Left ventricle myocardium inferior (tissue), 1 donor: ENCODE measurements at regions of chr11 and their contacts with region 1.

Region 1: DNA sequence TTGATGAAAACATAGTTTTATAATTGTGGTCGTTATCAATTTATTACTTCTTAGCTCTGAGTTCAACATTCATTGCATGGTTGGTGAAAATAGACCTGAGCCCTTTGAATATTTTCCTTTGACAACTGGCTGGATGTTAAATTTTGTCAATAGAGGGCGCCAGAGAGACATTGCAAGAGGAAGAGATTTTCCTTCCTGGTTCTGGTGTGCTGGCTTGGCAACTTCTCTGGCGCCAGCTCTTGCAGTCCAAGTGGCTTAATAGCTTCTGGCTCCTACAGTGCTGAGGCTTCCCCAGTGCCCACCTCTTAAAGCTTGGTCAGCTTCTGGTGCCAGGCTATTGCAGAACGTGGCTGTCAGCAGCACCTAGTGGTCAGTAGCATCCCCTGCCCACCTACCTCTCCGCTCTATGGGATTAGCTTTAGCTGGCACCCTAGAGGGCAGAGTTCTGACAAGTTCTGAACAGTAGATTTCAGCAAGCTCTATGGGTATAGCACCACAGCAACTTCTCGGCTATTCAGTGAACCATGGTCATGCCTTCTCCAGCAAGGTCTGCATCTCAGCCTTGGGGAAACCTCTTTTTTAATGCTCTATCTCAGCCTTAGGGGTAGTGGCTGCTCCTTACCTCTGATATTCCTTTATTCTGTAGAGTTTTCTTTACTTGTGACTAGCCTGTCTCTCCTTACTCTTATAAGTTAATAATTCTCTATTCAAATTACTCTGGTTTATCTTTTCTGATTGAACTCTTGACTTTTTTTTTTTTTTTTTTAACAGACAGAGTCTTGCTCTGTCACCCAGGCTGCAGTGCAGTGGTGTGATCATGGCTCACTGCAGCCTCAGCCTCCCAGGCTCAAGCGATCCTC is 59.4 kb downstream of the ACER3 start:
- DNase-seq: peak; percentile 61
- H3K4me3 ChIP-seq: peak overlapping the region; percentile 20
- H3K27ac ChIP-seq: no peak overlapping the region
- H3K4me1 ChIP-seq: peaks cover 18% of the 10 kb centered on the region
- H3K27me3 ChIP-seq: no peaks in the 10 kb centered on the region
- CTCF ChIP-seq: peak; percentile 94

Region 2: DNA sequence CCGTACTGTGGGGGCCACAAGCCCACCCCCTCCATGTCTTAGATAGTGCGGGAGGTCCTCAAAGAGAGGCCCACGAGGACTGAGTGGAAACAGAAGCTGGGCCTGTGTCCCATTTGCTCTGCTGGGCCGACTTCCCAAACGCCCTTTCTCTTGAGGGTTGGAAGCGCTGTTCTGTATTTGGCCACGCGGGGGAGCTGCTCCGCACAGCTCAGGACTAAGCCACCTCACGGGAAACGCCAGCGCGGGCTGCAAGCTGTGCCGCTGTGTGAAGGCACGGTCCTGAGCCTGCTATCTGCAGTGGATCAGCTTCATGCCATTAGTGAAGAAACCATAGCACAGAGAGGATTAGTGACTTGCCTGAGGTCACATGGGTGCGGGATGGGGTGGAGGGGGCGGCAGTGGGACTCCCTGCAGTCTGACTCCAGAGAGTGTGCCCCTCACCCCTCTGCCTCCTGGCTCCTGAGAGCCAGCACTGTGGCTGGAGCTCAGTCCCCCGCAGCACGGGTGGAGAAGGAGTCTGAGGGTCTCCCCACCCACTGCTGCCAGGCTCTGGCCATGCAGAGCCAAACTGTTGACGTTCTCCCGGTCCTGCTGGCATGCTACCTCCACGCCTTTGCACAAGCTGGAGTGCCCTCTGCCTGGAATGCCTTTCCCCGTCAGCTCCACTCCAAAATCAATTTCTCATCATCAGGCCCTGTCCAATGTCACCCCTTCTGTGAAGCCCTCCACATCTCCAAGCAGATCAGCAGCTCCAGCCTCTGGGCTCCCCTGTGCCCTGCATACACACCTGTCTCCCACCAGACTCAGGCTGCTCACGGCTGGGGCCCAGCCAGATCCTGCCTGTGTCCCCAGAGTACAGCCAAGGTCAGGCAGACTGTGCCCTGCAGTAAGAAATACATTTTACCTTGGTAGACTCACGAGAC is 198.1 kb before region 1 on chr11:
- intact Hi-C with region 1: loop called (anchors 10 kb)
- DNase-seq: peak; percentile 88
- H3K4me3 ChIP-seq: peak overlapping the region; percentile 47
- H3K27ac ChIP-seq: no peak overlapping the region
- H3K4me1 ChIP-seq: peaks cover 12% of the 10 kb centered on the region
- H3K27me3 ChIP-seq: peaks cover 26% of the 10 kb centered on the region
- CTCF ChIP-seq: peak; percentile 95

Region 3: GRCh38 chr11:76807206-76807875 is 112.8 kb before region 1 on chr11:
- intact Hi-C with region 1: loop called (anchors 2 kb)
- DNase-seq: peak; percentile 86
- H3K4me3 ChIP-seq: peak overlapping the region; percentile 26
- H3K27ac ChIP-seq: no peak overlapping the region
- H3K4me1 ChIP-seq: peaks cover 39% of the 10 kb centered on the region
- H3K27me3 ChIP-seq: no peaks in the 10 kb centered on the region
- CTCF ChIP-seq: peak; percentile 84

Region 4: DNA sequence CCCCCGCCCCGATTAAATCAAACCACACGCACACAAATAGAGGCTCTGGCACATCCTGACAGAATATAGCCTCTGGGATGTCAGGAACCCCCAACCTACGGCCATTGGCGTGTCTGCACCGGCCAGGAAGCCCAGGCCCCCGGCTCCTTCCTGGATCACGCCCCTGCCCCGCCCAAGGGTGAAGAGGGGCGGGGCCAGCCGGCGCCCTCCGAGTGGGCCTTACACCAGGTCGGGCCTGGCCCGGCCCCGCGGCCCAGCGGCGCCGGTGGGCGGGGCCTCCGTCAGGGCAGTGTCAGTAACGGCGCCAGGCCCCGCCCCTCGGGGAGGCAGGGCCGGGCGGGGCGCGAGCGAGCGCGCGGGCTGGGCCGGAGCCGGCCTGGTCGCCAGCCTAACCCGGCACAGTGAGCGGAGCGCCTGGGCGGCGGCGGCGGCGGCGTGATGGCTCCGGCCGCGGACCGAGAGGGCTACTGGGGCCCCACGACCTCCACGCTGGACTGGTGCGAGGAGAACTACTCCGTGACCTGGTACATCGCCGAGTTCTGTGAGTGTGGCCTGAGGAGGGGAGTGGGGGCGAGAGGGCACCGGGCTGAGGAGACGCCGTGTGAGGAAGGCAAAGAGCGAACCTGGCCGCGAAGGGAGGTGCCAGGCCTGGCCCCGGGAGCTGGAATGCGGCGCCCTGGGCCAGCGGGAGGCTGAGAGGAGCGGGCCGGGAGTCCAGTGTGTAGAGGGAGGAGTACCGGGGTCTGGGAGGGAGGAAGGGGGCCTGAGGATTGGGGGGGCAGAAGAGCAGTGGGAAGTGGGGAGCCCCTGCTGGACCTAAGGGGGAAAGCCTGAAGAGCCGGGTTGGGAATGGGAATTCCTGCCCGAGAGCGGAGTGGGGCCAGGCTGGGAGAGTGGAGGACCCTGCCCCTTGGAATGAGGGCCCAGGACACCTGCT is 59.3 kb before region 1 on chr11 and contains the start of gene ACER3:
- intact Hi-C with region 1: loop called (anchors 10 kb)
- DNase-seq: peak; percentile 94
- H3K4me3 ChIP-seq: peak within 1 kb of the TSS; percentile 91
- H3K27ac ChIP-seq: peak within 1 kb of the TSS; percentile 93
- H3K4me1 ChIP-seq: peaks cover 46% of the 10 kb centered on the region
- H3K27me3 ChIP-seq: no peaks in the 10 kb centered on the region
- CTCF ChIP-seq: peak; percentile 27
- total RNA-seq, gene ACER3: 8.5 TPM

Region 5: GRCh38 chr11:76885390-76886097 is 34.6 kb before region 1 on chr11:
- intact Hi-C with region 1: no loop called
- DNase-seq: no peak
- H3K4me3 ChIP-seq: no peak overlapping the region
- H3K27ac ChIP-seq: no peak overlapping the region
- H3K4me1 ChIP-seq: peaks cover 25% of the 10 kb centered on the region
- H3K27me3 ChIP-seq: no peaks in the 10 kb centered on the region
- CTCF ChIP-seq: no peak